ENCODE measurements at regions of chr12 and their contacts with region 1.

Region 1: GRCh38 chr12:68807576-68808387 is at the start of gene MDM2:
- DNase-seq: peak; percentile 96
- ATAC-seq: peak; percentile 89
- H3K4me3 Mint-ChIP-seq: peak within 1 kb of the TSS; percentile 89
- H3K27ac Mint-ChIP-seq: peak within 1 kb of the TSS; percentile 98
- H3K4me1 Mint-ChIP-seq: peaks cover 30% of the 10 kb centered on the region
- H3K27me3 Mint-ChIP-seq: no peaks in the 10 kb centered on the region
- CTCF ChIP-seq: peak; percentile 79
- total RNA-seq, gene MDM2: 148 to 153 TPM

Region 2: GRCh38 chr12:68331869-68332727 is 475.7 kb before region 1 on chr12 and contains the start of gene MDM1:
- CTCF ChIA-PET with region 1: no interaction called
- POLR2A ChIA-PET with region 1: interaction called, 6 read pairs
- intact Hi-C with region 1: loop called (anchors 5 kb)
- DNase-seq: peak; percentile 98
- ATAC-seq: peak; percentile 98
- H3K4me3 Mint-ChIP-seq: peak within 1 kb of the TSS; percentile 83
- H3K27ac Mint-ChIP-seq: peak within 1 kb of the TSS; percentile 83
- H3K4me1 Mint-ChIP-seq: peaks cover 39% of the 10 kb centered on the region
- H3K27me3 Mint-ChIP-seq: no peaks in the 10 kb centered on the region
- CTCF ChIP-seq: no peak
- total RNA-seq, gene MDM1: 15.4 to 17.9 TPM

Region 3: DNA sequence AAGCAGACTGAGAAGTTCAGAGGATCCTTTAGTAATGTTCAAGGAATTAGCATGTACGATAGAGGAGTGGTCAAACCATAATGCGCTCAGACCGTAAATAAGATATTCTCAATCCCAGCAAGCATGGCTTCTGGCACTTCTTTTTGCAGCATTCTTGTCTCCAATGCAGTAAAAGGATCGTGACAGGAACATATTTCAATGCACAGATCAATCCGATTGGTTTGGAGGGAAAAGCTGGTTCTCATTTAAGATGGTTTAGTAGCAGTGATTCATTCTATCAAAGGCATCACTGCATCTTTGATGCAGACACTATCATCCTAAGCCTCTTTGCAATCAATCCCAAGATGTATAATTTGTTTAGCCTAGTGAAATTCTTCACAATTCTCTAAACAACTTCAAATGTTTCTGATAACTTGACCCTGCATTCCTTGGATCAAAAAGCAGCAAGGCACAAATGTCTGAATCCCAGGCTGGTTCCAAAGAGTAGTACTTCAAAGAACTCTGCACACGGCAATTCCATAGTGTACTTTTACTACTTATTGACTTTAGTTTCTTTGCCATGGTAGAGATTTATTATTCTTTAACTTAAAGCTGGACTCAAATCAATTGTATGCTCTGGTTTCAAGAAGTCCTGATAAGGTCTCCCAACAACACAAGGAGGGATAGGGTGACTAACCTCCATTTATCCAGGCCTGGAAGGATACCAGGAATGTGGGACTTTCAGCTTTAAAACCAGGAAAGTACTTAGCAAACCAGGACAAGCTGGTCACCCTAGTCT is 378.9 kb before region 1 on chr12:
- CTCF ChIA-PET with region 1: no interaction called
- POLR2A ChIA-PET with region 1: no interaction called
- intact Hi-C with region 1: no loop called
- DNase-seq: no peak
- ATAC-seq: no peak
- H3K4me3 Mint-ChIP-seq: no peak overlapping the region
- H3K27ac Mint-ChIP-seq: no peak overlapping the region
- H3K4me1 Mint-ChIP-seq: no peaks in the 10 kb centered on the region
- H3K27me3 Mint-ChIP-seq: no peaks in the 10 kb centered on the region
- CTCF ChIP-seq: no peak

Region 4: GRCh38 chr12:68745904-68746571 is 61.7 kb before region 1 on chr12 and contains the start of gene SLC35E3:
- CTCF ChIA-PET with region 1: interaction called, 17 read pairs
- POLR2A ChIA-PET with region 1: interaction called, 10 read pairs
- intact Hi-C with region 1: no loop called
- DNase-seq: peak; percentile 96
- ATAC-seq: peak; percentile 97
- H3K4me3 Mint-ChIP-seq: peak within 1 kb of the TSS; percentile 96
- H3K27ac Mint-ChIP-seq: peak within 1 kb of the TSS; percentile 94
- H3K4me1 Mint-ChIP-seq: peaks cover 28% of the 10 kb centered on the region
- H3K27me3 Mint-ChIP-seq: no peaks in the 10 kb centered on the region
- CTCF ChIP-seq: no peak
- total RNA-seq, gene SLC35E3: 5.3 to 5.6 TPM

Region 5: DNA sequence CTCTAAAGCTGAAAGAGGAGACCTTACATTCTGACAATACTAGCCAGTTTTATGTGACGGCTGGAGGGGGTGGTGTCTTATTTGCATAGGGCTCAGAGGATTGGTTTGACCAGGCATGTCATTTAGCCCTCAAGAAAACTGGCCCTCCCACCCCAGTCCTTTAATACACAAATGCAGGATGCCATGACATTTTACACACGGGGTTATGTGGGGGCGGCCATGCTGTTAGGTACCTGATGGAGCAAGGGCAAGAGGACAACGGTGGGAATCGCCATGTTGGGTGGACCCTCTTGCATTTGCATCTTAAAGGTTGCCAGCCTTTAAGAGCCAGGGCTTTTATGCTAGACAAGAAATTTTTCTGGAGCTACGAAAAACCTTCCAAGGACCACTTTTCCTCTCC is 23.5 kb after region 1 on chr12:
- CTCF ChIA-PET with region 1: interaction called, 25 read pairs
- POLR2A ChIA-PET with region 1: interaction called, 5 read pairs
- intact Hi-C with region 1: no loop called
- DNase-seq: no peak
- ATAC-seq: no peak
- H3K4me3 Mint-ChIP-seq: no peak overlapping the region
- H3K27ac Mint-ChIP-seq: no peak overlapping the region
- H3K4me1 Mint-ChIP-seq: peaks cover 18% of the 10 kb centered on the region
- H3K27me3 Mint-ChIP-seq: no peaks in the 10 kb centered on the region
- CTCF ChIP-seq: no peak

Region 6: DNA sequence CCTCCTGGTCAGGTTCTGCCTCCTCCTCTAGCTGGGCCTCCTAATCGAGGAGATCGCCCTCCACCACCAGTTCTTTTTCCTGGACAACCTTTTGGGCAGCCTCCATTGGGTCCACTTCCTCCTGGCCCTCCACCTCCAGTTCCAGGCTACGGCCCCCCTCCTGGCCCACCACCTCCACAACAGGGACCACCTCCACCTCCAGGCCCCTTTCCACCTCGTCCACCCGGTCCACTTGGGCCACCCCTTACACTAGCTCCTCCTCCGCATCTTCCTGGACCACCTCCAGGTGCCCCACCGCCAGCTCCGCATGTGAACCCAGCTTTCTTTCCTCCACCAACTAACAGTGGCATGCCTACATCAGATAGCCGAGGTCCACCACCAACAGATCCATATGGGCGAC is 450.9 kb after region 1 on chr12:
- CTCF ChIA-PET with region 1: no interaction called
- POLR2A ChIA-PET with region 1: no interaction called
- intact Hi-C with region 1: no loop called
- DNase-seq: no peak
- ATAC-seq: no peak
- H3K4me3 Mint-ChIP-seq: no peak overlapping the region
- H3K27ac Mint-ChIP-seq: no peak overlapping the region
- H3K4me1 Mint-ChIP-seq: peaks cover 7% of the 10 kb centered on the region
- H3K27me3 Mint-ChIP-seq: no peaks in the 10 kb centered on the region
- CTCF ChIP-seq: no peak